ENCODE measurements at regions of chr6 and their contacts with region 1.

Region 1: GRCh38 chr6:151475653-151476523 is 17.9 kb upstream of the CCDC170 start:
- DNase-seq: no peak
- H3K4me3 ChIP-seq: peak overlapping the region in 1 of 3 donors; percentile 17
- H3K27ac ChIP-seq: no peak overlapping the region
- H3K4me1 ChIP-seq: no peaks in the 10 kb centered on the region
- H3K27me3 ChIP-seq: no peaks in the 10 kb centered on the region
- CTCF ChIP-seq: peak; percentile 44 to 78 (median 63)
- POLR2A ChIP-seq: no peak

Region 2: DNA sequence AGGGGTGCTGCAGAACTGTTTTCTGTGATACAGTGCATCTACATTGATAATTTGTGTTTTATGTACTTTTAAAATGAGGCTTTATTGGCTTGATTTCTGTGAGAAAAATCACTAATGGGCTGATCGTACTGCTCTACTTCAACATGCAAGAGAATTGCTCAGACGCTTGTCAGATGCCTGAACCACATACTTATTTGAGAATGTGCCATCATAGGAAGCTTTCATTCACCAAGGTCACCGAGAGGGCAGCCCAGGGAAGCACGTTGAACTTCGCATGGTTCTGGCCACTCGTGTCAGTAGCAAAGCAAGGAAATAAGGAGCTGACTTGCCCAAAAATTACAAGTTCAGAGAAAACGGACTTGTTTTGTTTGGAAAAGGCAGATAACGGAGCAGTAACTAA is 404.6 kb before region 1 on chr6:
- intact Hi-C with region 1: loop called (anchors 5 kb)
- DNase-seq: no peak
- H3K4me3 ChIP-seq: peak overlapping the region in 1 of 3 donors; percentile 1
- H3K27ac ChIP-seq: peak overlapping the region; percentile 9 to 48
- H3K4me1 ChIP-seq: no peaks in the 10 kb centered on the region
- H3K27me3 ChIP-seq: no peaks in the 10 kb centered on the region
- CTCF ChIP-seq: no peak
- POLR2A ChIP-seq: no peak

Region 3: GRCh38 chr6:151440930-151441329 is 35.0 kb before region 1 on chr6:
- intact Hi-C with region 1: loop called (anchors 2 kb)
- DNase-seq: no peak
- H3K4me3 ChIP-seq: no peak overlapping the region
- H3K27ac ChIP-seq: no peak overlapping the region
- H3K4me1 ChIP-seq: no peaks in the 10 kb centered on the region
- H3K27me3 ChIP-seq: no peaks in the 10 kb centered on the region
- CTCF ChIP-seq: peak in 2 of 3 donors; percentile 18 to 34
- POLR2A ChIP-seq: no peak

Measured in breast epithelium (tissue), 4 donors.